ENCODE measurements at regions of chr3 and their contacts with region 1.

Region 1: DNA sequence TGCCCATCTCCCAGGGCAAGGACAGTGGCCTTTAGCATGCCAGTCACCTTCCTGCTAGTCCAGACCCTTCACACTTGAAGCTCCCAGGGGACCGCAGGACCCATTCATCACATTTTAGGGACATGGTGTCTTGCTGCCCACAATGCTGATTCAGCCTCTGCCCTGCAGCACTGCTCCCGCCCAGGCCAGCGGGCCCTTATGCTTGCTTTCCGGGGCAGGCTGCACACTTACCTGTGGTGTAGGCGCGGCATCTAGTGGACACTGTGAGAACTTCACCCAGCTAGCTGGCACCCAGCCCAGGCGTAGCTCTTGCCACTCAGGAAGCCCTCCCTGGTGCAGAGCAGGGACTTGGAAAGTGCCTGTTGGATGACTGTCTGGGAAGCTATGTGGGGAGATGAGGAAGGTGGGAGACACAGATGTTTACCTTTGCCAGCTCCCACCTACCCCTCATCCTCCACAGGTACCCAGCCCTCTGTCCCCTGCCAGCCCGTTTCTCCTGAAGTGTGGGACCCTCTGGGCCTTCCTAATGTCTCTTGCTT is 26.2 kb upstream of the NR2C2 start:
- DNase-seq: peak; percentile 65
- ATAC-seq: peak; percentile 92
- H3K4me3 ChIP-seq: no peak overlapping the region
- H3K27ac ChIP-seq: no peak overlapping the region
- H3K4me1 ChIP-seq: peaks cover 0 to 3% of the 10 kb centered on the region in 2 experiments; a peak in 1 of 4 replicates
- H3K27me3 ChIP-seq: no peaks in the 10 kb centered on the region
- CTCF ChIP-seq: peak; percentile 91 to 97 (median 92)
- POLR2A ChIP-seq: no peak
- RAD21 ChIP-seq: peak; percentile 98

Region 2: GRCh38 chr3:14203521-14204079 is 717.5 kb before region 1 on chr3:
- CTCF ChIA-PET with region 1: interaction called, 6 read pairs
- POLR2A ChIA-PET with region 1: no interaction called
- RAD21 ChIA-PET with region 1: interaction called in 1 of 2 experiments, 3 read pairs
- intact Hi-C with region 1: loop called (anchors 10 kb)
- DNase-seq: peak; percentile 40
- ATAC-seq: peak; percentile 80
- H3K4me3 ChIP-seq: no peak overlapping the region
- H3K27ac ChIP-seq: no peak overlapping the region
- H3K4me1 ChIP-seq: no peaks in the 10 kb centered on the region
- H3K27me3 ChIP-seq: no peaks in the 10 kb centered on the region
- CTCF ChIP-seq: peak; percentile 79 to 85 (median 83)
- POLR2A ChIP-seq: no peak
- RAD21 ChIP-seq: peak; percentile 89

Region 3: GRCh38 chr3:14633819-14634424 is 287.2 kb before region 1 on chr3:
- CTCF ChIA-PET with region 1: interaction called, 5 read pairs
- POLR2A ChIA-PET with region 1: no interaction called
- RAD21 ChIA-PET with region 1: no interaction called
- intact Hi-C with region 1: loop called (anchors 1 kb)
- DNase-seq: peak; percentile 67
- ATAC-seq: peak; percentile 97
- H3K4me3 ChIP-seq: no peak overlapping the region
- H3K27ac ChIP-seq: no peak overlapping the region
- H3K4me1 ChIP-seq: no peaks in the 10 kb centered on the region
- H3K27me3 ChIP-seq: peaks cover 15% of the 10 kb centered on the region
- CTCF ChIP-seq: peak; percentile 72 to 97 (median 91); a peak in 5 of 6 replicates
- POLR2A ChIP-seq: no peak
- RAD21 ChIP-seq: peak; percentile 63

Region 4: GRCh38 chr3:14678015-14678503 is 243.1 kb before region 1 on chr3:
- CTCF ChIA-PET with region 1: interaction called, 19 read pairs
- POLR2A ChIA-PET with region 1: no interaction called
- RAD21 ChIA-PET with region 1: interaction called in 1 of 2 experiments, 3 read pairs
- intact Hi-C with region 1: loop called (anchors 1 kb)
- DNase-seq: no peak
- ATAC-seq: no peak
- H3K4me3 ChIP-seq: no peak overlapping the region
- H3K27ac ChIP-seq: no peak overlapping the region
- H3K4me1 ChIP-seq: no peaks in the 10 kb centered on the region
- H3K27me3 ChIP-seq: no peaks in the 10 kb centered on the region
- CTCF ChIP-seq: no peak
- POLR2A ChIP-seq: no peak
- RAD21 ChIP-seq: no peak

Region 5: DNA sequence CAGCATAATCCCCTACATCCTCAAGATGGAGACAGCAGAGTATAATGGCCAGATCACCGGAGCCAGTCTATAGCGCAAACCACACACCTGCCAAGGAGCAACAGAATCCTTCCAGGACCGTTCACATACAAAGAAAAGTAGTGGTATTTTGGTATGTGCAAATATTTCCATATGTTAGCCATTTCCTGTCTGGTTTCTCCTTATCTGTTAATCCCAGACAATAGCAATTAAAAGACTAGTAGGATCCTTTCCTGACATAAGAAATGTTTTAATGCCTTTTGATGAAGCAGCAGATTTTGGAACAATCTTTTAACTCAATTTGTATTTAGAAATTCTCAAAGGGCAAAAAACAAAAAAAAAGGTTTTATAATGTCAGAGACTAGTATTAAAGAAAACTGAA is 121.8 kb after region 1 on chr3:
- CTCF ChIA-PET with region 1: no interaction called
- POLR2A ChIA-PET with region 1: no interaction called
- RAD21 ChIA-PET with region 1: no interaction called
- intact Hi-C with region 1: loop called (anchors 5 kb)
- DNase-seq: no peak
- ATAC-seq: no peak
- H3K4me3 ChIP-seq: no peak overlapping the region
- H3K27ac ChIP-seq: no peak overlapping the region
- H3K4me1 ChIP-seq: no peaks in the 10 kb centered on the region
- H3K27me3 ChIP-seq: no peaks in the 10 kb centered on the region
- CTCF ChIP-seq: no peak
- POLR2A ChIP-seq: no peak
- RAD21 ChIP-seq: no peak

Region 6: DNA sequence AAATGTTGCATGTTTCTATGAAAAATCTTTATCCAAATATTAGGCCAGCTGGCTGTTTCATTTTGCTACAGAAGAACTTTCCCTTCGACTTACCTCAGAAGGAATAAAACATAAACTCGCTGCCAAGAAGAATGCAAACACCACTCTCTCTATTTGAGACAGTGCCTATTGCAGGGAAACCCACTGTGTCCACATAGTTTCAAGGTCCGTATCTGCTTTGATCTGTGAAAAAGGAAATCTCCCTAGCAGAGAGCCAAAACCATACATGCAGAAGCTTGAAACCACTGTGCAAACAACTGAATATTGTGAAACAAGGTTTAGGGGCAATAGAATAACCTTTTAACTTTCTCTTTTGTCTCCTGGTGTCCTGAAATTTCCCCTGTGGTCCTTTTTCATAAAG is 249.9 kb after region 1 on chr3:
- CTCF ChIA-PET with region 1: no interaction called
- POLR2A ChIA-PET with region 1: no interaction called
- RAD21 ChIA-PET with region 1: no interaction called
- intact Hi-C with region 1: no loop called
- DNase-seq: no peak
- ATAC-seq: no peak
- H3K4me3 ChIP-seq: no peak overlapping the region
- H3K27ac ChIP-seq: no peak overlapping the region
- H3K4me1 ChIP-seq: no peaks in the 10 kb centered on the region
- H3K27me3 ChIP-seq: no peaks in the 10 kb centered on the region
- CTCF ChIP-seq: no peak
- POLR2A ChIP-seq: no peak
- RAD21 ChIP-seq: no peak

Region 7: DNA sequence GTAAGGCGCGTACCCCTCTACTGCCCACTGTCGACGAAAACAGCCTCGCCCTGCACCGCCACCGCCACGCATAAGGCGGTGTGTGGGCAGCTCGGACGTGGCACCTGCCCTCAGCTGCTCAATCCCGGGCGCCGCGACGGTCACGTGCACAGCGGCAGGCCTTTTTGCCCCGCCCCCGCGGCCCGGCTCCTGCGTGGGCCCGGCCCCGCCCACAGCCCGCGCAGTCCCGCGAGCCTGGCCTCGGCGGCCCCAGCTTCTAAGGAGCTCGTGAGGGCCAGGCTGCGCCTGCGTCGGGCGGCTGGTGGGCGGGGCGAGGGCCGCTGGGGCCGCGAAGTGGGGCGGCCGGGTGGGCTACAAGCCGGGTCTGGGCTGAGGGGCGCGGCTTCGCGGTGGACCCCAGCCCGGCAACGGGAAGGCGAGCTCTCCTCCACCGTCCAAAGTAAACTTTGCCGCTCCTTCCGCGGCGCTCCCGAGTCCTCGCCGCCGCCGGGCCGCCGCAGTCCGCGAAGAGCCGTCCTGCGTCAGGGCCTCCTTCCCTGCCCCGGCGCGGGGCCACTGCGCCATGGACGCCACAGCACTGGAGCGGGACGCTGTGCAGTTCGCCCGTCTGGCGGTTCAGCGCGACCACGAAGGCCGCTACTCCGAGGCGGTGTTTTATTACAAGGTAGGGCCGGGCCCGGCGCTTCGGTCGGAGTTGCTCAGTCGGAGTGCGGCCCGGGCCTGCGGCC is 285.0 kb after region 1 on chr3 and contains the start of gene CAPN7:
- CTCF ChIA-PET with region 1: no interaction called
- POLR2A ChIA-PET with region 1: no interaction called
- RAD21 ChIA-PET with region 1: no interaction called
- intact Hi-C with region 1: loop called (anchors 10 kb)
- DNase-seq: peak; percentile 85
- ATAC-seq: peak; percentile 93
- H3K4me3 ChIP-seq: peak within 1 kb of the TSS; percentile 84 to 92
- H3K27ac ChIP-seq: peak within 1 kb of the TSS; percentile 75
- H3K4me1 ChIP-seq: peaks cover 6 to 18% of the 10 kb centered on the region in 2 experiments; a peak in 3 of 4 replicates
- H3K27me3 ChIP-seq: no peaks in the 10 kb centered on the region
- CTCF ChIP-seq: peak in 2 of 3 experiments; percentile 36 to 50; a peak in 3 of 6 replicates
- POLR2A ChIP-seq: peak; percentile 74
- RAD21 ChIP-seq: no peak
- total RNA-seq, gene CAPN7: 27.7 TPM

Measured in HCT116 (cell line).